ENCODE measurements at regions of chr4 and their contacts with region 1.

Region 1: GRCh38 chr4:75028196-75028854 is 95.4 kb downstream of the PARM1 start:
- DNase-seq: no peak
- H3K4me3 ChIP-seq: no peak overlapping the region
- H3K4me3 Mint-ChIP-seq: no peak overlapping the region
- H3K27ac Mint-ChIP-seq: no peak overlapping the region
- H3K4me1 ChIP-seq: no peaks in the 10 kb centered on the region
- H3K4me1 Mint-ChIP-seq: no peaks in the 10 kb centered on the region
- H3K27me3 ChIP-seq: no peaks in the 10 kb centered on the region
- H3K27me3 Mint-ChIP-seq: no peaks in the 10 kb centered on the region
- CTCF ChIP-seq: no peak

Region 2: DNA sequence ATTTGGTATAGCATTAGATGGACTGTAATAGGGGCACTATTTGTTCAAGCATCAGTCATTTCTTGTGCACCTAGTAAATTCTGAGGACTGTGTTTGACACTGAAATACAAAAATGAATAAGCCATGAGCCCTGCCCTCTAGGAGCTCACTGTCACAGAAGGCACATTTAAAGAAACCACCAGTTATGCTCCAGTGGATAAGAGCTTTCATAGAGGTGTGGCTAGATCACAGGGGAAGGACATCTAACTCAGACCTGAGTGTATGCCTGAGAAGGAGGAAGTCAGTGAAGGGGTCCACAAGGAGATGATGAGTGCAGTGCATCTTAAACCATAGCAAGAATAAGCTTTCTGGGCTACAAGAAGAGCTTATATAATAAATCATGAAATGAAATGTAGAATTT is 274.1 kb before region 1 on chr4:
- CTCF ChIA-PET with region 1: no interaction called
- POLR2A ChIA-PET with region 1: no interaction called
- intact Hi-C with region 1: no loop called
- DNase-seq: no peak
- H3K4me3 ChIP-seq: no peak overlapping the region
- H3K4me3 Mint-ChIP-seq: no peak overlapping the region
- H3K27ac Mint-ChIP-seq: no peak overlapping the region
- H3K4me1 ChIP-seq: no peaks in the 10 kb centered on the region; the same call in 1 of the 2 replicates
- H3K4me1 Mint-ChIP-seq: peaks cover 6% of the 10 kb centered on the region
- H3K27me3 ChIP-seq: no peaks in the 10 kb centered on the region
- H3K27me3 Mint-ChIP-seq: peaks cover 8% of the 10 kb centered on the region
- CTCF ChIP-seq: no peak

Region 3: GRCh38 chr4:75056277-75056676 is 28.0 kb after region 1 on chr4:
- CTCF ChIA-PET with region 1: no interaction called
- POLR2A ChIA-PET with region 1: no interaction called
- intact Hi-C with region 1: no loop called
- DNase-seq: no peak
- H3K4me3 ChIP-seq: no peak overlapping the region
- H3K4me3 Mint-ChIP-seq: no peak overlapping the region
- H3K27ac Mint-ChIP-seq: no peak overlapping the region
- H3K4me1 ChIP-seq: no peaks in the 10 kb centered on the region
- H3K4me1 Mint-ChIP-seq: no peaks in the 10 kb centered on the region
- H3K27me3 ChIP-seq: no peaks in the 10 kb centered on the region
- H3K27me3 Mint-ChIP-seq: peaks cover 5% of the 10 kb centered on the region
- CTCF ChIP-seq: no peak

Region 4: DNA sequence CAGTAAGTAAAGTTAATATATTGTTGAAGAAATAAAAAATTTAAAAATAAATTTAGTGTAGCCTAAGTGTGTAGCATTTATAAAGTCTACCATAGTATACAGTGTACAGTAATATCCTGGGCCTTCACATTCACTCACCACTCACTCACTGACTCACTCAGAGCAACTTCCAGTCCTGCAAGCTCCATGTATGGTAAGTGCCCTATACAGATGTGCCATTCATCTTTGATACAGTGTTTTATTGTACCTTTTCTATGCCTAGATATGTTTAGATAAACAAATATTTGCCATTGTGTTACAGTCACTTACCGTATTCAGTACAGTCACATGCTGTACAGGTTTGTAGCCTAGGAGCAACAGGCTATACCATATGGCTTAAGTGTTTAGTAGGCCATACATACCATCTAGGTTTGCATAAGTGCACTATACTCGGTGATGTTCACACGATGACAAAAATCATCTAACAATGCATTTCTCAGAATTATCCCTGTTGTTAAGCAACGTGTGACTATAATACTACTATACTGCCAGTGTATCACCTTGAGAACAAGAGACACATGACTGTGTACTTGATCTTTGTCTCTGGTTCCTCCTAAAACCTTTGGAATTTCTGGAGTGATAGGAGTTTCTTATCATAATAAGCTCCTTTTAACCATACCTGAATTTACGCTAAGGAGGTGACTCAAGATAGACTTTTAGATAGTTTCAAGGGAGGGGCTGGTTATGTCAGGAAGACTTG is 1895.5 kb after region 1 on chr4:
- CTCF ChIA-PET with region 1: no interaction called
- POLR2A ChIA-PET with region 1: no interaction called
- intact Hi-C with region 1: loop called (anchors 10 kb)
- DNase-seq: no peak
- H3K4me3 ChIP-seq: no peak overlapping the region
- H3K4me3 Mint-ChIP-seq: no peak overlapping the region
- H3K27ac Mint-ChIP-seq: no peak overlapping the region
- H3K4me1 ChIP-seq: peaks cover 48% of the 10 kb centered on the region
- H3K4me1 Mint-ChIP-seq: peaks cover 21% of the 10 kb centered on the region
- H3K27me3 ChIP-seq: no peaks in the 10 kb centered on the region
- H3K27me3 Mint-ChIP-seq: no peaks in the 10 kb centered on the region
- CTCF ChIP-seq: no peak

Measured in Caco-2 (cell line).